Activated T-helper 1 cell treated with anti-CD3 and anti-CD28 coated beads, Interleukin-12 subunit alpha, Interleukin-12 subunit beta, Interleukin-2, Interleukin-4 antibody, amounts not matched to agents 30 ng/mL and 10 ng/mL and 1 ng/mL, durations not matched to agents 14 hours and 24 hours and 36 hours (primary cell): ENCODE measurements at regions of chr10 and their contacts with region 1.

Region 1: DNA sequence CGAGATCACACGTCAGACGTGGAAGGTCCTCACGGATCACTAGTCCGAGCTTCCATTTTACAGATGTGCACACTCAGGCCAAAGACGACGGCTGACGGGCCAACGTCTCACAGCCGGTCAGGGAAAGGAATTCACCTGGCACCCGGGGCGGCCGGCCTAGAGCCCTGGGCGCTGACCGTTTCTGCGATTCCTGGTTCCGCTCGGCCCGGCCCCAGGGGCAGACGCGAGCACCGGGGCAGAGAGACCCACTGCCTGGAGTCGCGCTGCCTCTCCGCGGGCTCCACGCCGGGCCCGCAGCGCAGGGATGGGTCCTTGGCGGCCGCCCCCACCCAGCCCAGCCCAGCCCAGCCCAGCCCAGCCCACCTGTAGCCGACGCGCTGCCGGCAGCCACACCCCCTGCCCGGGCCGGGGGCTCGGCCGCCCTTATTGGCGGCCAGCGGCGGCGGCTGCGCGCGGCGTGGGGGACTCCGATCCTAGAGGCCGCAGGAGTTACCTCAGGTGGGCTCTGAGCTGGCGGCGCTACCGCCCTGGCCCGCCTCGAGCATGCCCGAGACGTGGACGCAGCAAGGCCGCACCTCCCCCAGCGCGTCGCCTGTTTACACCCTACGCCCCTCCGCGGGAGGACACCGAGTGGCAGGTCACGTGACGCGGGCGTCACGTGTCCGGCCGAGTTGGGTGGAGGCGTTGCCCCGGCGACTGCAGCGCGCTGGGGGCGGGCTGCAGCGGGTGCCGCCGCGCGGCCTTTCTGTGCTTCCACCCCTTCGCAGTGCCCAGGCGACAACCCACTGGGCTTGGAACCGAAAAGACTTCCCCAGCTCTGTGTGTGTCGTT is 78.1 kb downstream of the ZFAND4 start:
- DNase-seq: peak; percentile 89
- H3K4me3 Mint-ChIP-seq: peak overlapping the region; percentile 90
- H3K27ac Mint-ChIP-seq: peak overlapping the region; percentile 81
- H3K4me1 Mint-ChIP-seq: peaks cover 40% of the 10 kb centered on the region
- H3K27me3 Mint-ChIP-seq: peaks cover 20% of the 10 kb centered on the region

Region 2: DNA sequence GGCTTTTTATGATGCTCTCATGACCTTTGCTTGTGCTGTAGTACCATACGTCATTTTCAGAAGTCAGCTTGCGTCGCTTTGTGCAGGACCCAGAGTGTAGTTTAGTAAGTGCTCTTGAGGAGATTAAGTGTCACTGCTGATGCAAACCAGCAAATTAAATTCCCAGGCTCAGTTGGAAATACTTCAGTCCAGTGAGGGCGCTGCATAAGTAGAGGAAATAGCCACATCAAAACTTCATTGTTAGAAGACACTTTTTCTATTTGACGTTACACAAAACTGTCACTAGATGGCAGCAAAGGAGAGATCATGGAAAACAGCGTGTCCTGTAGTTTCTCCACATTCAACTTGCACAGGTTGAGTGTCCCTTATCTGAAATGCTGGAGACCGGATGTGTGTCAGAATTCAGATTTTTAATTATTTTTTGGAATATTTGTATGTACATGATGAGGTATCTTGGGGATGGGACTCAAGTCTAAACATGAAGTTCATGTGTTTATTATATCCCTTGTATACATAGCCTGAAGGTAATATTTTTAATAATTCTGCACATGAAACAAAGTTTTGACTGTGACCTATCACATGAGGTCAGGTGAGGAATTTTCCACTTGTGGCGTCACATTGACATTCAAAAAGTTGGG is 585.8 kb before region 1 on chr10:
- intact Hi-C with region 1: loop called (anchors 10 kb)
- DNase-seq: no peak
- H3K4me3 Mint-ChIP-seq: no peak overlapping the region
- H3K27ac Mint-ChIP-seq: no peak overlapping the region
- H3K4me1 Mint-ChIP-seq: no peaks in the 10 kb centered on the region
- H3K27me3 Mint-ChIP-seq: no peaks in the 10 kb centered on the region

Region 3: GRCh38 chr10:45420453-45421192 is 173.9 kb before region 1 on chr10:
- intact Hi-C with region 1: loop called (anchors 1 kb)
- DNase-seq: peak; percentile 65
- H3K4me3 Mint-ChIP-seq: peak overlapping the region; percentile 96
- H3K27ac Mint-ChIP-seq: peak overlapping the region; percentile 98
- H3K4me1 Mint-ChIP-seq: peaks cover 91% of the 10 kb centered on the region
- H3K27me3 Mint-ChIP-seq: no peaks in the 10 kb centered on the region

Region 4: DNA sequence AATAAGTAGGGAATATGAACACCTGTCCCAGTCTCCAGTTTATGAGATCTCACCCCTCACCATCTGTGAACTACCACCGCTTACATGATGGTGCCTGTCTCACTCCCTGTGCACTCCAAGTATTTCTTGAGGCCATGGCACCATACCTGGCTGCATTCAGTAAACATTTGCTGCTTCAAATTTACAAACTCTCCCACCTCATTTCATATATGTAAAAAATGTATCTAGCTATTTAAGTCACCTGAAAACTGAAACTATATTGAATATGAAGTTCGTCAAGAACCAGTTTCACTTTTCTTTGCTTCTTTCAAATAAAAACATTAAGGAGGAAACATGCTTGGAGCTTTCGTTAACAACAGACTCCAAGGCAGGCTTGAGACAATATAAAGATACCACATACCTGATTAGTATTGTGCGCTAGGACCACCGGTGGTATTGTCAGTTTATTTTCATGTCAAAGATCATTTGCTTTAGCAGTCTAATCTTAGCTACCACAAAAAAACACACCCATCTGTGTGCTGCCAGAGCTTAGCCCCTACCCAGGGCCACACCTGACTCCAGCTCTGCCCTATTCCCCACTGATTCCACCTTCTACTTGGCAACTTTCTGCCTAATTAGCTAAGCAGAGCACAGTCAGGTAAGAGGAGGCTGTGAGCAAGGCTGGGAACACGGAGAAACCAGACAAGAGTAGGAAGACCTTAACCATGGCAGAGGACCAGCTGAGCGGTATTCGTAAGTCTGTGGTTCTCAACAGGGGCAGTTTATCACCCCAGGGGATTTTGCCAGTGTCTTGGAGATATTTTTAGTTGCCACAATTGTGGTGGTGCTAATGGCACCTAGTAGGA is 13.9 kb before region 1 on chr10:
- intact Hi-C with region 1: loop called (anchors 2 kb)
- DNase-seq: no peak
- H3K4me3 Mint-ChIP-seq: peak overlapping the region; percentile 85
- H3K27ac Mint-ChIP-seq: peak overlapping the region; percentile 92
- H3K4me1 Mint-ChIP-seq: peaks cover 31% of the 10 kb centered on the region
- H3K27me3 Mint-ChIP-seq: no peaks in the 10 kb centered on the region

Region 5: GRCh38 chr10:45607276-45607675 is 12.8 kb after region 1 on chr10:
- intact Hi-C with region 1: no loop called
- DNase-seq: no peak
- H3K4me3 Mint-ChIP-seq: no peak overlapping the region
- H3K27ac Mint-ChIP-seq: no peak overlapping the region
- H3K4me1 Mint-ChIP-seq: no peaks in the 10 kb centered on the region
- H3K27me3 Mint-ChIP-seq: peaks cover 4% of the 10 kb centered on the region

Region 6: GRCh38 chr10:45672181-45673073 is 77.9 kb after region 1 on chr10 and contains the start of gene ZFAND4:
- intact Hi-C with region 1: loop called (anchors 2 kb)
- DNase-seq: peak; percentile 94
- H3K4me3 Mint-ChIP-seq: peak within 1 kb of the TSS; percentile 87
- H3K27ac Mint-ChIP-seq: peak within 1 kb of the TSS; percentile 79
- H3K4me1 Mint-ChIP-seq: peaks cover 30% of the 10 kb centered on the region
- H3K27me3 Mint-ChIP-seq: no peaks in the 10 kb centered on the region
- total RNA-seq, gene ZFAND4: 11.1 and 11.5 TPM in 2 replicates